ENCODE measurements at regions of chr7 and their contacts with region 1.

Region 1: DNA sequence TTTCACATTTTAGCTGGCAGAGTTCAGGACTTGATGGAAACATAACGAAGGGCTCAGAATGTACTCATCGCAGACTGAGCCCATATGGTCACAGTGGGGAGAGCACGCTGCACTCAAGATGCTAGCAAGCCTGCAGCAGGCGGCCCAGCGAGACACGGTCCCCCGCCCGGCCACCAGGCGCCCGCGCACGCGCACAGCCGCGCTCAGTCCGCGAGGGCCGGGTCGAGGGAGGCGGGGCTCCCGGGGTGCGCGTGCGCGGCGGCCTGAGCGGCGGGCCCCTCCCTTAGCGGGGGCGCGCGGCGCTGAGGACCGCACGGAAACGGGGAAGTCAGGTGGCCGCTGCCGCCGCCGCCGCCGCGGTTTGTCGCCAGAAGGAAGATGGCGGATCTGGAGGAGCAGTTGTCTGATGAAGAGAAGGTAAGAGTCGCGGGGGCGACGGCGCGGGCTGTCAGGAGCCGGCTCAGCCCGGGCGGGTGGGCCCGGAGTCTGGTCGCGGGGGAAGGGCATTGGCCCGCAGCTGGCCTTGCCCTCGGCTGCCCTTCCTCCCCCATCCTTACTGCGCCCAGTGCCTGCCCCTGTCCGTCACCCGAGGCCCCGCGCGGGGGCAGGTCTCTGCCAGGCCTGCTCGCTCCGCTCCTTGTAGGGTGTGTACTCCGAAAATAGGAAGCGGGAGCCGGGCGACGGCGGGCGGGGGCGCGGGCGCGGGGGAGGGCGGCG is at the start of gene CAPZA2:
- DNase-seq: peak; percentile 99
- H3K4me3 Mint-ChIP-seq: peak within 1 kb of the TSS; percentile 100
- H3K27ac Mint-ChIP-seq: peak within 1 kb of the TSS; percentile 94
- H3K4me1 Mint-ChIP-seq: peaks cover 30% of the 10 kb centered on the region
- H3K27me3 Mint-ChIP-seq: peaks cover 10% of the 10 kb centered on the region
- total RNA-seq, gene CAPZA2: 154 and 158 TPM in 2 replicates

Region 2: GRCh38 chr7:116671681-116672595 is 190.5 kb before region 1 on chr7 and contains the start of gene MET:
- intact Hi-C with region 1: loop called (anchors 2 kb)
- DNase-seq: peak; percentile 75
- H3K4me3 Mint-ChIP-seq: peak within 1 kb of the TSS; percentile 75
- H3K27ac Mint-ChIP-seq: peak within 1 kb of the TSS; percentile 71
- H3K4me1 Mint-ChIP-seq: peaks cover 9% of the 10 kb centered on the region
- H3K27me3 Mint-ChIP-seq: peaks cover 69% of the 10 kb centered on the region
- total RNA-seq, gene MET: 2.2 and 2.3 TPM in 2 replicates

Region 3: DNA sequence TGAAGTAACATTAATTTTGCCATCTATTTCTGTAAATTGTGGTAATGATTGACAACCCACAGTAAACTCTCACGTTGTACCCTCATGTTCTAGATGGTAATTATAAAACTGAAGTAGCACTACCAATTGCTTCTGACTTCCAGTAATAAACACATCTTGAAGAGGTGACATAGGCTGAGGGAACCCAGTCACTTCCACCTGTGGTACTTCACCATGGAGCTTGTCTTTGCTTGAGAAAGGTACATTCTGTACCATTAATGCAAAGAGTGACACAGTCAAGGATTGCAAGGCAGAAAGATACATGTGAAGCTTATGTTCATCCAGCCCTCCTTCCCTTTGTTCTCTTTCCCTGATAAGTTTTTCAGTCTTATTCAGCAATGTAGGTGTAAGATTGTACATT is 11.2 kb after region 1 on chr7:
- intact Hi-C with region 1: loop called (anchors 1 kb)
- DNase-seq: no peak
- H3K4me3 Mint-ChIP-seq: no peak overlapping the region
- H3K27ac Mint-ChIP-seq: no peak overlapping the region
- H3K4me1 Mint-ChIP-seq: peaks cover 49% of the 10 kb centered on the region
- H3K27me3 Mint-ChIP-seq: no peaks in the 10 kb centered on the region

Region 4: DNA sequence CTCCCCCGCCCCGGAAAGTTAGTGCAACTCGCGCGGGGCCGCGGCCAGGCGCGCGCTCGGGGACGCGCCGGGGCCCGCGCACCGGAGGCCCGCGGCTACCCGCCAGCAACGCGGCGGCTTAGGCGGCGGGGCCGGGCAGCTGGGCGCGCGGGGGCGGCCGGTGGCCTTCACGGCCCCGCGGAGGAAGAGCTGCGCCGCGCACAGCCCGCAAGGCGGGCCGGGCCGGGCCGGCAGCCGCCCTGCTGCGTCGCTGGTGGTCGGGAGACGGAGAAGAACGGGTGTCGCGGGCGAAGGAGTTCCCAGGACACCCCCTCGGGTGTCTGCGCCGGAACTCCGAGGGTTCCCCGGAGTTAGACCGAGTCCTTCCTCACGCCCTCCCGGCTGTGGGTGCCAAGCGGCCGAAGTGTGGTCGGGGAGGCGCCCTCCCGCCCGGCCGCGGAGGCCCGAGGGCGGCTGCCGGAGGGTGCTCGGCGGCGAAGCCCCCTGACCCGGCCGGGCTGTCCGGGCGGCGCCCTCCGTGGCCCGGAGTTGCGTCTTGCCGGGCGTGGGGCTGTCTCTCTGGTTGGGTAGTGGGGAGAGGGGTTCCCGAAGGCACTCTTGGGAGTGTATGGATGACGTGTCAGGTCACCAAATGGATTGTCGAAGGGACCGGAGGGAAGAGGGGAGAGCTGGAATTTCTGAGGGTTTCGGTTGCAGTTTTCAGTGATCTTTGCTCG is 91.5 kb after region 1 on chr7:
- intact Hi-C with region 1: loop called (anchors 2 kb)
- DNase-seq: peak; percentile 79
- H3K4me3 Mint-ChIP-seq: peak overlapping the region; percentile 91
- H3K27ac Mint-ChIP-seq: peak overlapping the region; percentile 89
- H3K4me1 Mint-ChIP-seq: peaks cover 16% of the 10 kb centered on the region
- H3K27me3 Mint-ChIP-seq: peaks cover 21% of the 10 kb centered on the region

Region 5: GRCh38 chr7:118183786-118184564 is 1321.6 kb after region 1 on chr7 and contains the start of gene LSM8:
- intact Hi-C with region 1: loop called (anchors 2 kb)
- DNase-seq: peak; percentile 99
- H3K4me3 Mint-ChIP-seq: peak within 1 kb of the TSS; percentile 99
- H3K27ac Mint-ChIP-seq: peak within 1 kb of the TSS; percentile 99
- H3K4me1 Mint-ChIP-seq: peaks cover 32% of the 10 kb centered on the region
- H3K27me3 Mint-ChIP-seq: no peaks in the 10 kb centered on the region
- total RNA-seq, gene LSM8: 49.4 and 59.9 TPM in 2 replicates

Measured in activated CD4-positive, alpha-beta T cell treated with anti-CD3 and anti-CD28 coated beads, Interleukin-2, amount 10 ng/mL, durations not matched to agents 24 days and 14 days (primary cell).